ENCODE measurements at regions of chr15 and their contacts with region 1.

Region 1: GRCh38 chr15:89647191-89647851 is 7.9 kb downstream of the KIF7 start:
- DNase-seq: peak; percentile 88
- CTCF ChIP-seq: peak; percentile 92

Region 2: GRCh38 chr15:89628806-89629715 is 18.3 kb before region 1 on chr15:
- CTCF ChIA-PET with region 1: interaction called, 13 read pairs
- POLR2A ChIA-PET with region 1: no interaction called
- DNase-seq: peak; percentile 11
- CTCF ChIP-seq: no peak

Measured in GM10248 (cell line).